Cardiac septum (tissue), 1 donor: ENCODE measurements at regions of chrX and their contacts with region 1.

Region 1: DNA sequence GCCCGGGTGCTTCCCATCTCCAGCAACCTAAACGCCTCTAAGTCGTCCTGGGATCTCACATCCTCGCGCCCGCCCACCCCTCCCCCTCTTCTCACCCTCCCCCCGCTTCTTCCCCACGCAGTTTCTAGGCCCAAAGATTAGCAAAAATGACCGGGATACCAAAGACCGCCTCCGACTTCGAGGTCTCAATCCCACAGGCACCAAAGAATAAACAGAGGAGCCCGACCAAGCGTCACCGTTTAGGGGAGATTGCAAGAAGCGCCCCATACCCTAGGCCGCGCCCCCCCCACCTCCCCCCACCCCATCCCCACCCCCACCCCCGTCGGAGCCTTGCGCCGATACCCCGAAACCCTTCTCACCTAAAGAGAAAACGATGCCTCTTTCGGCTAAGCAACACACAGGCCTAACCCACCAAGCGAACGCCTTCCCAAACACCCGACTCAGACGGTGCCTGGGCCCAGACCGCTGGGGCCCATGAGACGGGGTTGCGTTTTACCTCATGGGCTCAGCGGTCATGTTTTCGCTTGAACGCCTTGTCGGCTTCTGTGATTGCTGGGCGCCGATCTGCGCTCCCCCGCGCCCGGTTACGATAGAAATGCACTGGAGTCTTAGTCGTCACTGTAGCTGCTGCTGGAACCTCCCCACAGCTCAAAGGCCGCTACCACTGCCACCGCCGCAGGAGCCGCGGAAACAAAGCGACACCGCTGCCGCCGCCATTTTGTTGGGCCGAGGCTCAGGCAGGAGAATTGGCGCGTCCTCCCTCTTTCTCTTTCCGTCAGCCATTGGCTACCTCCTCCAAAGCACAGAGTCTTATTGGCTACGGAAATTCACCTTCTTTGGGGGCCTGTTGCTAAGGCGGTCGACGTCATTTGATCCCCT is at the start of gene ATRX:
- DNase-seq: peak; percentile 82
- total RNA-seq, gene ATRX: 86.8 TPM

Region 2: GRCh38 chrX:77742788-77743476 is 42.8 kb before region 1 on chrX:
- intact Hi-C with region 1: no loop called
- DNase-seq: no peak

Region 3: GRCh38 chrX:77899081-77899828 is 113.5 kb after region 1 on chrX and contains the start of gene COX7B:
- intact Hi-C with region 1: loop called (anchors 5 kb)
- DNase-seq: no peak
- total RNA-seq, gene COX7B: 1,124 TPM